ENCODE measurements at regions of chr17 and their contacts with region 1.

Region 1: GRCh38 chr17:63478791-63479494 is 2.1 kb downstream of the ACE start:
- DNase-seq: peak; percentile 89
- H3K4me3 ChIP-seq: no peak overlapping the region
- H3K27ac ChIP-seq: peak overlapping the region in 3 of 4 donors; percentile 82 to 85 (median 82)
- H3K4me1 ChIP-seq: peaks cover 14 to 27% (median 23%) of the 10 kb centered on the region in 4 donors
- H3K27me3 ChIP-seq: peaks cover 13% of the 10 kb centered on the region
- CTCF ChIP-seq: peak; percentile 58 to 85 (median 79)
- EP300 ChIP-seq: no peak
- POLR2A ChIP-seq: no peak

Region 2: DNA sequence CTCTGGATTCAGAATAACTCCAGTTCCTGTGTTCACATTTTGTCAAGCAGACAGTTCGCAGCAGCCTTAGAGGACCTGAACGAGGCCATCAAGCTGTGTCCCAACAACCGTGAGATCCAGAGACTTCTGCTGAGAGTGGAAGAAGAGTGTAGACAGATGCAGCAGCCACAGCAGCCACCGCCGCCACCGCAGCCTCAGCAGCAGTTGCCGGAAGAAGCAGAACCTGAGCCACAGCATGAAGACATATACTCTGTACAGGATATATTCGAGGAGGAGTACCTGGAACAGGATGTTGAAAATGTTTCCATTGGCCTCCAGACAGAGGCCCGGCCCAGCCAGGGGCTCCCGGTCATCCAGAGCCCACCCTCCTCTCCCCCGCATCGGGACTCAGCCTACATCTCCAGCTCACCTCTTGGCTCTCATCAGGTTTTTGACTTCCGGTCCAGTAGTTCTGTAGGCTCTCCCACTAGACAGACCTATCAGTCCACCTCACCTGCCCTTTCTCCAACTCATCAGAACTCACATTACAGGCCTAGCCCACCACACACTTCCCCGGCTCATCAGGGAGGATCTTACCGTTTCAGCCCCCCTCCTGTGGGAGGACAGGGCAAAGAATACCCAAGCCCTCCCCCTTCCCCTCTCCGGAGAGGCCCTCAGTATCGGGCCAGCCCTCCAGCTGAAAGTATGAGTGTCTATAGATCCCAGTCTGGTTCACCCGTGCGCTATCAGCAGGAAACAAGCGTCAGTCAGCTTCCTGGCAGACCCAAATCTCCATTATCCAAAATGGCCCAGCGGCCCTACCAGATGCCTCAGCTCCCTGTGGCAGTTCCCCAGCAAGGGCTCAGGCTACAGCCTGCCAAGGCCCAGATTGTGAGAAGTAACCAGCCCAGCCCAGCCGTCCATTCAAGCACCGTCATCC is 58.7 kb before region 1 on chr17:
- in situ Hi-C with region 1: loop called in 1 of 4 experiments (anchors 5 kb)
- intact Hi-C with region 1: no loop called
- DNase-seq: no peak
- H3K4me3 ChIP-seq: no peak overlapping the region
- H3K27ac ChIP-seq: no peak overlapping the region
- H3K4me1 ChIP-seq: no peaks in the 10 kb centered on the region
- H3K27me3 ChIP-seq: no peaks in the 10 kb centered on the region
- CTCF ChIP-seq: no peak
- EP300 ChIP-seq: no peak
- POLR2A ChIP-seq: no peak

Region 3: GRCh38 chr17:63434876-63435684 is 43.9 kb before region 1 on chr17:
- in situ Hi-C with region 1: no loop called
- intact Hi-C with region 1: loop called (anchors 5 kb)
- DNase-seq: peak; percentile 83
- H3K4me3 ChIP-seq: no peak overlapping the region
- H3K27ac ChIP-seq: peak overlapping the region; percentile 26 to 80 (median 77)
- H3K4me1 ChIP-seq: peaks cover 20 to 71% (median 54%) of the 10 kb centered on the region in 4 donors
- H3K27me3 ChIP-seq: no peaks in the 10 kb centered on the region
- CTCF ChIP-seq: peak in 2 of 5 experiments; percentile 11
- EP300 ChIP-seq: no peak
- POLR2A ChIP-seq: no peak